ENCODE measurements at regions of chr11 and their contacts with region 1.

Region 1: GRCh38 chr11:73184953-73185671 is 33.0 kb upstream of the P2RY2 start:
- DNase-seq: peak; percentile 40
- ATAC-seq: peak; percentile 96
- H3K4me3 ChIP-seq: peak overlapping the region in 1 of 2 experiments; percentile 15; a peak in 1 of 4 replicates
- H3K27ac ChIP-seq: no peak overlapping the region
- H3K4me1 ChIP-seq: peaks cover 2 to 24% of the 10 kb centered on the region in 2 experiments; a peak in 3 of 4 replicates
- H3K27me3 ChIP-seq: no peaks in the 10 kb centered on the region
- CTCF ChIP-seq: peak; percentile 95 to 99 (median 96)
- POLR2A ChIP-seq: no peak
- RAD21 ChIP-seq: peak; percentile 95

Region 2: DNA sequence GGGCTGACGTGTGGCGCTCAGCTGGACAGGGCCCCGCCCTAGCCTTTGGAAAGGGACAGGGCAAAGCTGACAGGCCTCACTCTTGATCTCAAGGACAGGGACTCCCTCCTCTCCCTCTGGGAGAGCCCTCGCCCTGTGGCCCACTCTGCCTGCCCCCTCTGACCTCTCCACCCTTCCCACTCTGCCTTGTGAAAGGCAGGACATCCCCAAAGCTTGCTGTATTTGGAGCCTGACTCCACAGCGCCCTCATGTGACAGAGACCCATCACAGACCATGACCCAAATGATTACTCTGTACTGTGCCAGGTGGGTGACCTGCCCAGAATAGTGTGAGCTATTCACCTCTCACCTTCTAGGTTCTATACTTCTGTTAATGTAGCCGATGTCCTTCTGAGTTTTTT is 51.7 kb after region 1 on chr11:
- CTCF ChIA-PET with region 1: interaction called, 35 read pairs
- POLR2A ChIA-PET with region 1: no interaction called
- RAD21 ChIA-PET with region 1: interaction called, 4 to 9 read pairs
- intact Hi-C with region 1: loop called (anchors 1 kb)
- DNase-seq: peak; percentile 39
- ATAC-seq: peak; percentile 88
- H3K4me3 ChIP-seq: no peak overlapping the region
- H3K27ac ChIP-seq: no peak overlapping the region
- H3K4me1 ChIP-seq: peaks cover 0 to 14% of the 10 kb centered on the region in 2 experiments; a peak in 1 of 4 replicates
- H3K27me3 ChIP-seq: no peaks in the 10 kb centered on the region
- CTCF ChIP-seq: peak; percentile 86 to 90 (median 86)
- POLR2A ChIP-seq: no peak
- RAD21 ChIP-seq: peak; percentile 92

Region 3: DNA sequence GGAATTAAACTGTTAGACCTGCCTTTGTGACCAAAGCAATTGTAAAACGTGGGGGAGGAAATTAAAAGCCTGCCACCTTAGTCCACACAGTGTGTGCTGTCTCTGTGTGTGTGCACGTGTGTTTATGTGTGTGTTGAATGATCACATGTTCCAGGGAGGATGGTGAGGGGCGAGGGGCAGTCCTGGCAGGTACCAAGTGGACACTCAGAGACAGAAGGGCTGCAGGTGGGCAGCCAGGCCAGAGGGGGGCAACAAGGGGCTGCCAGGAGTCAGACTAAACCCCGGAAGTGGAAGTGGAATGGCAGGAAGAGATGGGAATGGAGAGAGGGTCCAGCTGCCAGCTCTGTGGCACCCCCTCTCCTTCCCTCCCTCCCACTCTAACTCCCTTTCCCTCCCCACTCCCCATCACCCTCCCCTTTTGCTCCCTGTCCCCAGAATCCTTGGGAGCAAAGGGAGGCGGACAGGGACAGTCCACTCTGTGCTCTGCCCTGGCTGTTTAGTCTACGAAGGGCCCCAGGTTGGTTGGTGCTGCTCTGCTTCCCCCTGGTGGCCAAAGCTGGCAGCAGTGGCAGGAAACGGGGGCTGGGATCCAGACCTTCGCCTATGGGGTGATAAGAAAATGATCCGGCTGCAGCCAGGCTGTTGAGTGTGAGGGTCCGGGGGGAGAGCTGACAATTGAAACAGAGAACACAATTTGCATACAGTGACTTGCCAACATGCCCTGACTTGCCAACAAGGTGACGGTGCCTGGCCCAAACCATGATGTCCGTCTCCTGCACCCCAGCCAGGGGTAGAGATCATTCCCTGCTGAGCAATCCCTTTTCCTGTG is 57.4 kb after region 1 on chr11:
- CTCF ChIA-PET with region 1: interaction called, 35 read pairs
- POLR2A ChIA-PET with region 1: no interaction called
- RAD21 ChIA-PET with region 1: interaction called, 4 to 9 read pairs
- intact Hi-C with region 1: loop called (anchors 1 kb)
- DNase-seq: peak; percentile 65
- ATAC-seq: peak; percentile 93
- H3K4me3 ChIP-seq: peak overlapping the region; percentile 42 to 48
- H3K27ac ChIP-seq: no peak overlapping the region
- H3K4me1 ChIP-seq: peaks cover 0 to 26% of the 10 kb centered on the region in 2 experiments; a peak in 1 of 4 replicates
- H3K27me3 ChIP-seq: no peaks in the 10 kb centered on the region
- CTCF ChIP-seq: peak; percentile 96 to 98 (median 97)
- POLR2A ChIP-seq: no peak
- RAD21 ChIP-seq: peak; percentile 93